CD4-positive, alpha-beta T cell (primary cell): ENCODE measurements at regions of chr18 and their contacts with region 1.

Region 1: GRCh38 chr18:67023059-67023458 is 419.2 kb upstream of the CDH19 start:
- DNase-seq: no peak
- ATAC-seq: no peak
- H3K4me3 ChIP-seq: no peak overlapping the region
- H3K4me3 Mint-ChIP-seq: no peak overlapping the region
- H3K27ac ChIP-seq: no peak overlapping the region
- H3K27ac Mint-ChIP-seq: no peak overlapping the region
- H3K4me1 ChIP-seq: no peaks in the 10 kb centered on the region
- H3K4me1 Mint-ChIP-seq: no peaks in the 10 kb centered on the region
- H3K27me3 ChIP-seq: no peaks in the 10 kb centered on the region
- H3K27me3 Mint-ChIP-seq: no peaks in the 10 kb centered on the region
- CTCF ChIP-seq: no peak

Region 2: GRCh38 chr18:66235206-66235605 is 787.9 kb before region 1 on chr18:
- CTCF ChIA-PET with region 1: no interaction called
- POLR2A ChIA-PET with region 1: no interaction called
- intact Hi-C with region 1: no loop called
- DNase-seq: no peak
- ATAC-seq: no peak
- H3K4me3 ChIP-seq: no peak overlapping the region
- H3K4me3 Mint-ChIP-seq: no peak overlapping the region
- H3K27ac ChIP-seq: no peak overlapping the region
- H3K27ac Mint-ChIP-seq: no peak overlapping the region
- H3K4me1 ChIP-seq: no peaks in the 10 kb centered on the region
- H3K4me1 Mint-ChIP-seq: no peaks in the 10 kb centered on the region
- H3K27me3 ChIP-seq: no peaks in the 10 kb centered on the region
- H3K27me3 Mint-ChIP-seq: no peaks in the 10 kb centered on the region
- CTCF ChIP-seq: no peak

Region 3: DNA sequence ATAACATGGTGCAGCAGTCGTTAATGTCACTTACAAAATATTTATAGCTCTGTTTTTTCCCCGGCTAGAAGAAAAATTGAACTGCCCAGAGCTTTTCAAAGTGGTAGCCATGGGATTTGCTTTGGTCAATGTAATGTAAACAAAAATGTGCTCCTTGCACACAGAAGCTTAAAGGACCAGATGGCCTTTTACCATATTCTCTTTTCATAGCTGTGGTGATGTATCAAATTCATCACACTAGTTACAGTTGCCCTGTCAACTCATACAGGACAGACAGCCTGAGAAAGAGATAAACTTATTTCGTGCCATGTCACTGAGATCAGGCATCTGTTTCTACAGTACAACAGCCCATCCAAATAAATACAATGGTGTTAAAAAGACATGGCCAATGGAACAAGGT is 51.1 kb before region 1 on chr18:
- CTCF ChIA-PET with region 1: no interaction called
- POLR2A ChIA-PET with region 1: no interaction called
- intact Hi-C with region 1: loop called in 1 of 2 experiments (anchors 5 kb)
- DNase-seq: no peak
- ATAC-seq: no peak
- H3K4me3 ChIP-seq: no peak overlapping the region
- H3K4me3 Mint-ChIP-seq: no peak overlapping the region
- H3K27ac ChIP-seq: no peak overlapping the region
- H3K27ac Mint-ChIP-seq: no peak overlapping the region
- H3K4me1 ChIP-seq: no peaks in the 10 kb centered on the region
- H3K4me1 Mint-ChIP-seq: no peaks in the 10 kb centered on the region
- H3K27me3 ChIP-seq: no peaks in the 10 kb centered on the region
- H3K27me3 Mint-ChIP-seq: no peaks in the 10 kb centered on the region
- CTCF ChIP-seq: no peak